Sigmoid colon (tissue), 7 donors: ENCODE measurements at regions of chr17 and their contacts with region 1.

Region 1: GRCh38 chr17:56798908-56799307 is 34.8 kb downstream of the C17orf67 start:
- DNase-seq: no peak
- H3K4me3 ChIP-seq: no peak overlapping the region
- H3K27ac ChIP-seq: no peak overlapping the region
- H3K4me1 ChIP-seq: peaks cover 0 to 6% (median 2%) of the 10 kb centered on the region in 4 donors
- H3K27me3 ChIP-seq: no peaks in the 10 kb centered on the region
- CTCF ChIP-seq: no peak
- EP300 ChIP-seq: no peak
- POLR2A ChIP-seq: no peak

Region 2: DNA sequence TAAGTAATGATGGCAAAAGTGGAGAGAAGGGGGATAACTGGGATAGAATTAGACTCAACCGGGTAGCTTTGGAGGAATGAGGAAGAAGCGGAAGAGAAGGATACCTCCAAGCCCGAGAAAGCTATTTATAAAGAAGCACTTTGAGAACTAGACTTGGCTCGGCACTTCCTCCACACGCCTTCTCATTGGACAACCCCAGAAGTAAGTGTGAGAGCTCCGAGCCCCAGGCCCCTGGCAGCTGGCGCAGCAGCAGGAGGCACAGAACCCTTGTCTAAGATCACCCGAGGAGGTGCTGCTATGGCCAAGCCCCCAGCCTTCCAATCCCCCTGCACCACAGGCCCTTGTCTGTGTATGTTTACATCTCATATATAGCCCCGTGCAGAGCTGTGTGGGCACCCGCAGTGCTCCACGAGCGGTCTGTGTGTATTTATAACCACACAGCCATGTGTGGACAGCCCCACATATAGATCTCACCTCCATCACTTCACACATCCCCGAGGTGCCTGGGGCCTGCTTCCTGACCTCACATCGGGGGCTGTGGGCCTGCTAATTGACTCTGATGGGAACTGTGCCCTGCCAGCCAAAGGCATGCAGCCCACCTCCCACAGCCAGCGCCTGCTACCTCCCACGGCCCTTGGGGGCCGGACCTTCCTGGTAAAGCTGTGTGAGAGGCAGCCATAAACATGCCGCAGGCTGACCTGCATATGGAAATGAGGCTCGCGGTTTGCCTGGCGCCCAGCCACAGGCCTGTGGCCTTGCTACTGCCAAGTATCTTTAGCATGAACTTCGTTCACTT is 61.3 kb before region 1 on chr17:
- intact Hi-C with region 1: loop called (anchors 10 kb)
- DNase-seq: no peak
- H3K4me3 ChIP-seq: no peak overlapping the region
- H3K27ac ChIP-seq: no peak overlapping the region
- H3K4me1 ChIP-seq: no peaks in the 10 kb centered on the region
- H3K27me3 ChIP-seq: no peaks in the 10 kb centered on the region
- CTCF ChIP-seq: no peak
- EP300 ChIP-seq: no peak
- POLR2A ChIP-seq: no peak

Region 3: DNA sequence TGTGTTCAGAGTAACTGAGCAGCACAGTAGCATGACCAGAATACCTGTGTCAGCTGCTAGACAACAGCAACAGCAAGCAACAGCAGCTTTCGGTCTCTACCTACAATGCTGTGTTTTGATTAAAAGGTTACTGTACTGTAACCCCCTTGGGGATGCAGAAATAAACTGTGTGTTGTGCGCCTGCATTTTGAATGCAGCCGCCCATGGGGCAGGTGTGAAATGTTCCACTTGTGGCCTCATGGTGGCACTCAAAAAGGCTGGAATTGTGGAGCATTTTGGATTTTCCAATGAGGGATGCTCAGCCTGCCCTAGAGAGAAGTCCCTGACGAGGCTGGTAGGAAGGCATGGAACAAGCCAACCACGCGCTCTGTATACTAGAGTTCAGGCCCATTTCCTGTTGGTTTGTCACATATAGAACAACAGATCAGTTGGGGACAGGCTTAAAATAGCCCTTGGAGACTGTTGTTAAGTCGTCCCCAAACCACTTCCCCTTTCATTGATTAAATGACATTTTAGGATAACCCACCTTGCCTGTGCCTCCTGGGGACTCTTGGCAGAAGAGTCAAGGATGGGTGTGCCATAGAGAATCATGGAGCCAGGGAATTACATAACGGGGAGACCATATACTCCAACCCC is 206.2 kb after region 1 on chr17:
- intact Hi-C with region 1: no loop called
- DNase-seq: no peak
- H3K4me3 ChIP-seq: no peak overlapping the region
- H3K27ac ChIP-seq: no peak overlapping the region
- H3K4me1 ChIP-seq: peaks cover 0 to 5% (median 3%) of the 10 kb centered on the region in 4 donors
- H3K27me3 ChIP-seq: no peaks in the 10 kb centered on the region
- CTCF ChIP-seq: peak in 3 of 4 experiments; percentile 28 to 43 (median 37)
- EP300 ChIP-seq: no peak
- POLR2A ChIP-seq: no peak